Colonic mucosa (tissue), 4 donors: ENCODE measurements at regions of chr2 and their contacts with region 1.

Region 1: GRCh38 chr2:156319811-156320485 is 12.6 kb downstream of the NR4A2 start:
- DNase-seq: peak; percentile 65
- H3K4me3 ChIP-seq: peak overlapping the region; percentile 32
- H3K27ac ChIP-seq: peak overlapping the region; percentile 53
- H3K4me1 ChIP-seq: no peaks in the 10 kb centered on the region
- H3K27me3 ChIP-seq: no peaks in the 10 kb centered on the region
- CTCF ChIP-seq: no peak

Region 2: GRCh38 chr2:155377266-155377680 is 942.7 kb before region 1 on chr2:
- intact Hi-C with region 1: loop called (anchors 10 kb)
- DNase-seq: no peak
- H3K4me3 ChIP-seq: no peak overlapping the region
- H3K27ac ChIP-seq: no peak overlapping the region
- H3K4me1 ChIP-seq: no peaks in the 10 kb centered on the region
- H3K27me3 ChIP-seq: no peaks in the 10 kb centered on the region
- CTCF ChIP-seq: peak; percentile 19

Region 3: GRCh38 chr2:156192468-156192867 is 127.5 kb before region 1 on chr2:
- intact Hi-C with region 1: loop called (anchors 10 kb)
- DNase-seq: no peak
- H3K4me3 ChIP-seq: no peak overlapping the region
- H3K27ac ChIP-seq: no peak overlapping the region
- H3K4me1 ChIP-seq: no peaks in the 10 kb centered on the region
- H3K27me3 ChIP-seq: no peaks in the 10 kb centered on the region
- CTCF ChIP-seq: no peak

Region 4: DNA sequence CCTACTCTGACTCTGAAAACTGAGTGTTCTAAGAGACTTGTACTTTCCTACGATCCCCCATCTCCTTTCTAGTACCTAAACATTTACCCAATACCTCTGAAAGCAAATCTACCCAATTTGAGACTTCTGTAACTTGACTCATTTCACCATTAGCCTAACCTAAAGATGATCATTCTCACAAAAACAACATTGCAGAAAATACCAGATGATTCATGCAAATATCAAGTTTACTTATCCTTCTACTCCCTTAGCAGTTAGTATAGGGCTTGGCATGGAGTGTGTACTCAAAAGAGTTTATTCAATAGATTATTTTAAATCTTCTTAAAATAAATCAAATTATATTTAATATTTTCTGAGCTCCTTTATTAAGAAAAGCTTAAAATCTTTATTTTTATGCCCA is 77.1 kb before region 1 on chr2:
- intact Hi-C with region 1: loop called (anchors 10 kb)
- DNase-seq: no peak
- H3K4me3 ChIP-seq: no peak overlapping the region
- H3K27ac ChIP-seq: no peak overlapping the region
- H3K4me1 ChIP-seq: no peaks in the 10 kb centered on the region
- H3K27me3 ChIP-seq: no peaks in the 10 kb centered on the region
- CTCF ChIP-seq: no peak